AG04450 (cell line): ENCODE measurements at regions of chr4 and their contacts with region 1.

Region 1: DNA sequence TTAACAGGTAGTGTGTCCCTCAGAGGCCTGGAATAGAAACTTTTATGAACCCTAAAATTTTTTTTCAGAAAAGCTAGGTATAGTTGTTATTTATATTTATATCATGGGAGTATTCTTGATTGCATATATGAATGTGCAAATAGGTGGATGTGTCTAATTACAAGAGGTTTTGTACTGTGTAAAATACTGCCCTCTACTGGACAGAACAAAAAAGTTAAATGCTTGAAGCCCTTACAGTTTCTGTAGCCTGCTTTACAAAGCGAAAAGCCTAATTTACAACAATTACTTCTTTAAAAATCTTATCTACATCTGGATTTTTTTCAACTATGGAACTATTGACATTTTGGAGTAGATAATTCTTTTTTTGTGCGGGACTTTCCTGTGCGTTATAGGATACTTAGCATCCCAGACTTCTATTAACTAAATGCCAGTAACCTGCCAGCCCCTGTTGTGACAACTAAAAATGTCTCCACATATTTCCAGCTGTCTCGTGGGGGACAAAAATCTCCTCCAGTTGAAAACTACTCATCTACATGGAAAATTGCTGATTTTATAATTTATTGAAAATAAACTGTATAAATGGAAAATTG is 35.1 kb downstream of the ENPEP start:
- DNase-seq: peak; percentile 26
- H3K4me3 ChIP-seq: no peak overlapping the region
- H3K27ac ChIP-seq: no peak overlapping the region
- H3K27me3 ChIP-seq: no peaks in the 10 kb centered on the region
- CTCF ChIP-seq: peak; percentile 66

Region 2: GRCh38 chr4:109977854-109978501 is 533.1 kb before region 1 on chr4:
- CTCF ChIA-PET with region 1: interaction called, 11 read pairs
- POLR2A ChIA-PET with region 1: no interaction called
- DNase-seq: no peak
- H3K4me3 ChIP-seq: no peak overlapping the region
- H3K27ac ChIP-seq: no peak overlapping the region
- H3K27me3 ChIP-seq: no peaks in the 10 kb centered on the region
- CTCF ChIP-seq: peak; percentile 65

Region 3: GRCh38 chr4:110049951-110050925 is 460.8 kb before region 1 on chr4:
- CTCF ChIA-PET with region 1: interaction called, 25 read pairs
- POLR2A ChIA-PET with region 1: no interaction called
- DNase-seq: peak; percentile 20
- H3K4me3 ChIP-seq: no peak overlapping the region
- H3K27ac ChIP-seq: no peak overlapping the region
- H3K27me3 ChIP-seq: no peaks in the 10 kb centered on the region
- CTCF ChIP-seq: peak; percentile 88

Region 4: GRCh38 chr4:110198435-110199416 is 312.3 kb before region 1 on chr4 and contains the start of gene ELOVL6:
- CTCF ChIA-PET with region 1: interaction called, 10 read pairs
- POLR2A ChIA-PET with region 1: no interaction called
- DNase-seq: peak; percentile 18
- H3K4me3 ChIP-seq: peak within 1 kb of the TSS; percentile 83
- H3K27ac ChIP-seq: peak within 1 kb of the TSS; percentile 47
- H3K27me3 ChIP-seq: no peaks in the 10 kb centered on the region
- CTCF ChIP-seq: no peak
- polyA plus RNA-seq, gene ELOVL6: 21.4 and 30.7 TPM in 2 replicates

Region 5: DNA sequence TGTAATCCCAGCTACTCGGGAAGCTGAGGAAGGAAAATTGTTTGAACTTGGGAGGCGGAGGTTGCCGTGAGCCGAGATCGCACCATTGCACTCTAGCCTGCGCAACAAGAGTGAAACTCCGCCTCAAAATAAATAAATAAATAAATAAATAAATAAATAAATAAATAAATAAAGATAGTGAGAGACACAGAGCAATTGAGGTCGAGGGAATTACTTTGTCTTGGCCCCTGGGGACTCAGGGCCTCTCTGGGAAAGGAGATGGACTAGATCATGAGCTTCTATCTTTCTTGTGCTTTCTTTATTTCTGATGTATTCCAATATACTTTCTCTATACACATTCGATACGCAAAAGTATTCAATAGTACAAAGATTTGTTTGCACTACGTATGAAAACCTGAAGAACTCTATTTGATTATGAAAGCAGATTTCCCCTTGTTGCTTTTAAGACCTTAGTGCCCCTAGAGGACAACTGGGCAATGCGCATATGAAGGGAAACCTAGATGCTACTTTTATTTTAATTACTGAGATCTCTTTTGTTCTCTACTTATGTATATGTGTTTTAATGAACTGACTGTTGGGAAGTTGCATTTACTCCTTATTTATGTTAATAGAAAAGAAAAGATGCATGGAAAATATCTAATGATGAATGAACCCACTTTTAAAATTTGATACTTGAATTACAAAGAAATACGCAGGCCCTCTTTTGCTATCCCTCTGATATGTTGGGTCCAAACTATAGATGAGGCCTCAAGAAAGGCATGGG is 299.9 kb before region 1 on chr4:
- CTCF ChIA-PET with region 1: interaction called, 10 read pairs
- POLR2A ChIA-PET with region 1: no interaction called
- DNase-seq: no peak
- H3K4me3 ChIP-seq: no peak overlapping the region
- H3K27ac ChIP-seq: no peak overlapping the region
- H3K27me3 ChIP-seq: no peaks in the 10 kb centered on the region
- CTCF ChIP-seq: peak; percentile 90

Region 6: DNA sequence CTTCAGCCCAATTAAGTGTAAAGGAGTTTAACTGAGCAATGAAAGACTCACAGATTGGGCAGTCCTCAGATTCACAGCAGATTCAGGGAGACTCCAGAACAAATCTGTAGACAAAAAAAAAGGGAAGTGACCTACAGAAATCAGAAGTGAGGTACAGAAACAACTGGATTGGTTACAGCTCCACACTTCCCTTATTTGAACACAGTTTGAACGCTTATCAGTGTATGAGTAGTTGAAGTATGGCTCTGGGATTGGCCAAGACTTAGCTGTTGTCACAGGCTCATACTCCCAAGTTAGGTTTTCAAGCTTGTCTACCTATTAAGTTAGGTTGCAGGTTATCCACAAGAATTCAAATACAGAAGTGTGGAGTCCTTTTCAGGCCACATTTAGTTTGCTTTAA is 200.3 kb before region 1 on chr4:
- CTCF ChIA-PET with region 1: interaction called, 33 read pairs
- POLR2A ChIA-PET with region 1: no interaction called
- DNase-seq: no peak
- H3K4me3 ChIP-seq: no peak overlapping the region
- H3K27ac ChIP-seq: no peak overlapping the region
- H3K27me3 ChIP-seq: no peaks in the 10 kb centered on the region
- CTCF ChIP-seq: no peak

Region 7: GRCh38 chr4:110344162-110344561 is 166.9 kb before region 1 on chr4:
- CTCF ChIA-PET with region 1: interaction called, 34 read pairs
- POLR2A ChIA-PET with region 1: no interaction called
- DNase-seq: no peak
- H3K4me3 ChIP-seq: no peak overlapping the region
- H3K27ac ChIP-seq: no peak overlapping the region
- H3K27me3 ChIP-seq: no peaks in the 10 kb centered on the region
- CTCF ChIP-seq: 0 out of 2 replicates have a peak, but pooled peaks have one; percentile 26